Activated naive CD4-positive, alpha-beta T cell treated with anti-CD3 and anti-CD28 coated beads for 36 hours (primary cell): ENCODE measurements at regions of chr20 and their contacts with region 1.

Region 1: DNA sequence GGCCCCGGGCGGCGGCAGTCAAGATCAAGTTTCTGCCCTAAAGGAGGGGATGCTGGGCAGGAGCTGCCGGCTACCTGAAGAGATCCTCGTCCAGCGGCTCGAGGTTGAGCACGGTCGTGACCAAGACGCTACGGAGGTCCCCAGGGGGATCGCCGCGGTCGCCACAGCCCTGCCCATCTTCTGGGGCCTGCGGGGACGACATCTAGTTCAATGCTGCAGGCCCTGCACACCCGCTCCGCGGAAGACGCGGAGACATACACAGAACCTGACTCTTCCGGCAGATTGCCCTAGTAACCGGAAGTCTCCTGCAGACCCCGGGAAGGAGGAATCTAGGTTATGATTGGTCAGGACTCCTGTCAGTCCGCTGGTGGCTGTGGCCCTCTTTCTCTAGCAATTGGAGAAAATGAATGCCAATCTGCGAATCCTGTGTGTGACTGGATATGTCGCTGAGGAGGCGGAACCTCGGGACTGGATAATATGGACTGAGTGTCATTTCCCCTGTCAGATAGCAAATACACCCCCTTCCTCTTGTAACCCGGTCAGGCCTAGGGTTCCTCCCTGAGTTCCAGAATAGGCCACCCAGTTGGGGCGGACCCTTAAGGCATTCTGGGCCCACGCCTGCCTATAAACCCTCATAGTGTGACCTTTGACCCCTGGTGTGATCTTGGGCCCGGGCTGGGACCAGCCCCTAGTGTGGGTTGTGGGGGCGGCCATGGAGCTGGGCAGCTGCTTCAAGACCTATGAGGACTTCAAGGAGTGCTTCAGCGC is at the starts of genes ACOT8 and ZSWIM3:
- DNase-seq: peak; percentile 98
- H3K4me3 Mint-ChIP-seq: peak within 1 kb of the TSS; percentile 95
- H3K27ac Mint-ChIP-seq: peak within 1 kb of the TSS; percentile 98
- H3K4me1 Mint-ChIP-seq: peaks cover 44% of the 10 kb centered on the region
- H3K27me3 Mint-ChIP-seq: no peaks in the 10 kb centered on the region
- total RNA-seq, gene ACOT8: 21.4 to 23.3 TPM
- total RNA-seq, gene ZSWIM3: 3.3 to 3.7 TPM

Region 2: GRCh38 chr20:45611054-45611453 is 246.2 kb before region 1 on chr20:
- CTCF ChIA-PET with region 1: no interaction called
- intact Hi-C with region 1: no loop called
- DNase-seq: peak; percentile 62
- H3K4me3 Mint-ChIP-seq: no peak overlapping the region
- H3K27ac Mint-ChIP-seq: no peak overlapping the region
- H3K4me1 Mint-ChIP-seq: peaks cover 15% of the 10 kb centered on the region
- H3K27me3 Mint-ChIP-seq: peaks cover 10% of the 10 kb centered on the region

Region 3: DNA sequence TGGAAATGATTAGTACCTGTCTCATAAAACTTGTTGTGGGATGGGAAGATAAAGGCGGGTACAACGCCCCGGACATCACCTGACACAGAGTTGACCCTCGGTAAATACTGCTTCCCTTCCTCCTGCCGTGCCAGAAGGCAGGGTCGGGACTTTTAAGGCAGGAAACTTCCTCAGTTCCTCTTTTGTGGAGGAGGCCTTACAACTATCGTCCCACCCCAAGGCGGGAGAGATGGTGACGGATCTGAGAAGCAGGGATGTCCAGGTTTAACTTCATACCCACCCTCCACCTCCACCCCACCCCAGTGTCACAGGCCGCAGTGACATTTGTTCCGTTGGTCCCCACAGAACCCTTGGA is 65.0 kb before region 1 on chr20:
- CTCF ChIA-PET with region 1: no interaction called
- intact Hi-C with region 1: loop called (anchors 5 kb)
- DNase-seq: no peak
- H3K4me3 Mint-ChIP-seq: peak overlapping the region; percentile 86
- H3K27ac Mint-ChIP-seq: peak overlapping the region; percentile 63
- H3K4me1 Mint-ChIP-seq: peaks cover 9% of the 10 kb centered on the region
- H3K27me3 Mint-ChIP-seq: no peaks in the 10 kb centered on the region

Region 4: GRCh38 chr20:45812157-45813020 is 44.9 kb before region 1 on chr20 and contains the start of gene UBE2C:
- CTCF ChIA-PET with region 1: no interaction called
- intact Hi-C with region 1: loop called (anchors 1 kb)
- DNase-seq: peak; percentile 98
- H3K4me3 Mint-ChIP-seq: peak within 1 kb of the TSS; percentile 94
- H3K27ac Mint-ChIP-seq: peak within 1 kb of the TSS; percentile 82
- H3K4me1 Mint-ChIP-seq: peaks cover 17% of the 10 kb centered on the region
- H3K27me3 Mint-ChIP-seq: no peaks in the 10 kb centered on the region
- total RNA-seq, gene UBE2C: 189 to 202 TPM

Region 5: GRCh38 chr20:45833030-45833882 is 24.0 kb before region 1 on chr20 and contains the start of gene SNX21:
- CTCF ChIA-PET with region 1: interaction called, 3 read pairs
- intact Hi-C with region 1: loop called (anchors 1 kb)
- DNase-seq: peak; percentile 67
- H3K4me3 Mint-ChIP-seq: peak within 1 kb of the TSS; percentile 75
- H3K27ac Mint-ChIP-seq: no peak within 1 kb of the TSS
- H3K4me1 Mint-ChIP-seq: peaks cover 11% of the 10 kb centered on the region
- H3K27me3 Mint-ChIP-seq: no peaks in the 10 kb centered on the region
- total RNA-seq, gene SNX21: 0.72 to 1.2 TPM

Region 6: DNA sequence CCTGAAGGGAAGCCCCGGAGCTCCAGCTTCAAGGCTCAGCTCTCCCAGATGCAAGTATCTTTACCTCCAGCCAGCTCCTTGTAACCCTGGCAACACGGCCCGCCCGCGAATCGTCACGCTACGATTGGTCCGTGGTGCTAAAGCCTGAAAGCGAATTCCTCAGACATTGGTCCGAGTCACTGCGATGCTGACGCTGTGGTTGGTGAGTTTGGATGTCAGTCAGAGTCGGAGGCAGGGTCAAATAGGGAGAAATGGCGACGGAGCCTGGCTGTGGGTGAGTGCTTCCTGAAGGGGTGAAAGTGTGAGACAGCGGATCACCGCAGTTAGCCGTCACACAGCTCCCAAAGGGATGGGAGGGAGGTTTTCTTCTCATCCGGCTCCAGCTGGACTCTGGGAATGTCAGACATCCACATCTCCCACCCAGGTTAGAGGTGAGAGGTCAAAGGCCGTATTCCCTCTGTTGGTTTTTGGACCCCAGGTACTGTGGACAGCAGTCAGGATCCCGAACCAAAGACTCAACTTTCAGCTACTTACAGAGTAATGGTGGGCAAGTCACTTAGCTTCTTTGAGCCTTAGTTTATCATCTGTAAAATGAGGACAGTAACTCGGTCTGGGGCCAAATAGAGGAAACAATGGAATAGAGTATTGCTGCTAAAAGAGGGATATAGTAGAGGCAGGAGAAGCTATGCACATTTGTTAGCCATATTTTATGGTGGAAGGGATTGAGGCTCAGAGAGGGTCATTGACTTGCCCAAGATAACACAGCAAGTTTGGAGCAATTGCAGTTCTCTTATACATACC is 23.9 kb after region 1 on chr20 and contains the start of gene ZSWIM1:
- CTCF ChIA-PET with region 1: no interaction called
- intact Hi-C with region 1: loop called (anchors 1 kb)
- DNase-seq: peak; percentile 100
- H3K4me3 Mint-ChIP-seq: peak within 1 kb of the TSS; percentile 94
- H3K27ac Mint-ChIP-seq: peak within 1 kb of the TSS; percentile 93
- H3K4me1 Mint-ChIP-seq: peaks cover 48% of the 10 kb centered on the region
- H3K27me3 Mint-ChIP-seq: no peaks in the 10 kb centered on the region
- total RNA-seq, gene ZSWIM1: 8.2 to 8.4 TPM

Region 7: DNA sequence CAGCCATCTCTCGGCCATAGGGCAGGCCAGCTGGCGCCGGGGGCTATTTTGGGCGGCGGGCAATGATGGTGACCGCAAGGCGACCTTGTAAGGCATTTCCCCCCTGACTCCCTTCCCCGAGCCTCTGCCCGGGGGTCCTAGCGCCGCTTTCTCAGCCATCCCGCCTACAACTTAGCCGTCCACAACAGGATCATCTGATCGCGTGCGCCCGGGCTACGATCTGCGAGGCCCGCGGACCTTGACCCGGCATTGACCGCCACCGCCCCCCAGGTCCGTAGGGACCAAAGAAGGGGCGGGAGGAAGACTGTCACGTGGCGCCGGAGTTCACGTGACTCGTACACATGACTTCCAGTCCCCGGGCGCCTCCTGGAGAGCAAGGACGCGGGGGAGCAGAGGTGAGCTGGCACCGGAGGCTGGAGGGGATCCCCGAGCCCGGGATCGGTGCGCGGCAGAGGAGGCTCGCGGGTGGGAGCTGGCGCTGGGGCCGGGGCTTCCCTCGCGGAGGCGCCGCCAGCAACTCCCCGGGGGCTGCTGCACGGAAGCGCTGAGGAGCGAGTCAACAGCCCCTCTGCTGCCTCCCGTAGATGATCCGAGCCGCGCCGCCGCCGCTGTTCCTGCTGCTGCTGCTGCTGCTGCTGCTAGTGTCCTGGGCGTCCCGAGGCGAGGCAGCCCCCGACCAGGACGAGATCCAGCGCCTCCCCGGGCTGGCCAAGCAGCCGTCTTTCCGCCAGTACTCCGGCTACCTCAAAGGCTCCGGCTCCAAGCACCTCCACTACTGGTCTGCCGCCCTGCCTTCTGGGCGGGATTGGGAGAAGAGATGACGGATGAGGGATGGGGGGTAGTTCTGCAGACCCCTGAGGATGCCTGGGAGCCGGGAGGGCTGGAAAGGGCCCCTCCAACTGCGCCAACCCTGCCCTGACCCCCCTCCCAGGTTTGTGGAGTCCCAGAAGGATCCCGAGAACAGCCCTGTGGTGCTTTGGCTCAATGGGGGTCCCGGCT is 34.0 kb after region 1 on chr20 and contains the starts of genes CTSA and NEURL2:
- CTCF ChIA-PET with region 1: interaction called, 5 read pairs
- intact Hi-C with region 1: loop called (anchors 2 kb)
- DNase-seq: peak; percentile 91
- H3K4me3 Mint-ChIP-seq: peak within 1 kb of the TSS; percentile 89
- H3K27ac Mint-ChIP-seq: peak within 1 kb of the TSS; percentile 84
- H3K4me1 Mint-ChIP-seq: peaks cover 22% of the 10 kb centered on the region
- H3K27me3 Mint-ChIP-seq: no peaks in the 10 kb centered on the region
- total RNA-seq, gene CTSA: 28.7 to 31.5 TPM
- total RNA-seq, gene NEURL2: 0.99 to 1.4 TPM

Region 8: DNA sequence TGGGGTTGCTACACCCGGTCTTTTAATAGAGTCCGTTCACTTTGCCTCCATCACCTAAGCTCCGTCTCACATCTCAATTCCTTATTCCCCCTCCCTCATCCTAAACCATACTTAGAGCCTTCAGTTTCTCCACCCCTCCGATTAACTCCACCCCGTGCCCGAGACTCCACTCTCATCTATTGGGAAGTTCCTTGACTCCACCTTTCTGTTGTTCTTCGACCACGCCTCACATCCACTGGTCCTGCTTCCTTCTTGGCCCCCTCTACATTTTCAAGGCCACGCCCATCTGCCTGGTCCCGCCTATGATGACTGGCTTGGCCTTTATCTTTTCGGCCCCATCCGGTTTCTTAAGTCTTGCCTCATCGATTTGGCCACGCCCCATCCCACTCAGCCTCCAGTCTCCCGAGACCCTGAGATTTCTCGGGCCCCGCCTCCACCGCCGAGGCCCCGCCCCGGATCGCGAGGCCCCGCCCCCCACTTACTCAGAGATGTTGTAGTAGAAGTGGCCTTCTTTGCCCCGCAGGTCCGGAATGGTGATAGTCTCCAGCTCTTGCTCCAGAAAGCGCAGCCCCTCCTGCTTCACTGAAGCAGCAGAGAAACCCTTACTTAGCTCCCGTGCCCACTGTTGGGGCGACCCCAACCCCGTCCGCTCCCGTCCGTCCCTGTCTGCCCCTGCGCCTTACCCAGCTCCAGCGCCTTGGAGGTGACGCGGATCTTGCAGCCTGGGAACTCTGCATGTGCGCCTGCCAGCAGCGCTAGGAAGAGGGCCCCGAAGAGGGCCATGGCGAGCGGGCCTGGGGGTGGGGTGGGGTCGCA is 53.6 kb after region 1 on chr20:
- CTCF ChIA-PET with region 1: no interaction called
- intact Hi-C with region 1: loop called (anchors 1 kb)
- DNase-seq: peak; percentile 97
- H3K4me3 Mint-ChIP-seq: peak overlapping the region; percentile 82
- H3K27ac Mint-ChIP-seq: peak overlapping the region; percentile 25
- H3K4me1 Mint-ChIP-seq: peaks cover 20% of the 10 kb centered on the region
- H3K27me3 Mint-ChIP-seq: peaks cover 16% of the 10 kb centered on the region

Region 9: GRCh38 chr20:46179863-46180262 is 322.6 kb after region 1 on chr20:
- CTCF ChIA-PET with region 1: no interaction called
- intact Hi-C with region 1: no loop called
- DNase-seq: no peak
- H3K4me3 Mint-ChIP-seq: no peak overlapping the region
- H3K27ac Mint-ChIP-seq: no peak overlapping the region
- H3K4me1 Mint-ChIP-seq: no peaks in the 10 kb centered on the region
- H3K27me3 Mint-ChIP-seq: peaks cover 26% of the 10 kb centered on the region